Lower leg skin (tissue), 4 donors: ENCODE measurements at regions of chr4 and their contacts with region 1.

Region 1: DNA sequence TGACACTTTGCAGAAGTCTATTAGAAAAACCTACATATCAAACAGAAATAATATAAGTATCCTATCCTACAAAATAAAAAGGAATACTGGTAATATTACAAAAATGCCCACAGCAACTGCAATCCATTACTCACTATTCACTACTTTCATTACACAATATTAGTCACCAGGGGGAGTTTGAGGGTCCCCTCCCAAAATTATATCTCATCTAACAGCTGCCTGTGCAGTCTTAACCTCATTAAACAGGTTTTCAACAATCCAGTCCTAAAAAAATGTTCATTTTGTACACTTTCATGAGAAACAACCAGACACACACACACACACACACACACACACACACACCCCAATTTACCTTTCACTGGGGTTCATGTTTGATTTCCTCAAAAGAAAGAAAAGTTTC is 2.9 kb downstream of the CLOCK start:
- DNase-seq: no peak
- H3K4me3 ChIP-seq: no peak overlapping the region
- CTCF ChIP-seq: no peak
- POLR2A ChIP-seq: no peak

Region 2: GRCh38 chr4:54902271-54902670 is 641.6 kb before region 1 on chr4:
- intact Hi-C with region 1: no loop called
- DNase-seq: no peak
- H3K4me3 ChIP-seq: no peak overlapping the region
- CTCF ChIP-seq: no peak
- POLR2A ChIP-seq: no peak

Region 3: GRCh38 chr4:55358668-55359067 is 185.2 kb before region 1 on chr4:
- intact Hi-C with region 1: loop called (anchors 5 kb)
- DNase-seq: no peak
- H3K4me3 ChIP-seq: no peak overlapping the region
- CTCF ChIP-seq: no peak
- POLR2A ChIP-seq: no peak